ENCODE measurements at regions of chr4 and their contacts with region 1.

Region 1: DNA sequence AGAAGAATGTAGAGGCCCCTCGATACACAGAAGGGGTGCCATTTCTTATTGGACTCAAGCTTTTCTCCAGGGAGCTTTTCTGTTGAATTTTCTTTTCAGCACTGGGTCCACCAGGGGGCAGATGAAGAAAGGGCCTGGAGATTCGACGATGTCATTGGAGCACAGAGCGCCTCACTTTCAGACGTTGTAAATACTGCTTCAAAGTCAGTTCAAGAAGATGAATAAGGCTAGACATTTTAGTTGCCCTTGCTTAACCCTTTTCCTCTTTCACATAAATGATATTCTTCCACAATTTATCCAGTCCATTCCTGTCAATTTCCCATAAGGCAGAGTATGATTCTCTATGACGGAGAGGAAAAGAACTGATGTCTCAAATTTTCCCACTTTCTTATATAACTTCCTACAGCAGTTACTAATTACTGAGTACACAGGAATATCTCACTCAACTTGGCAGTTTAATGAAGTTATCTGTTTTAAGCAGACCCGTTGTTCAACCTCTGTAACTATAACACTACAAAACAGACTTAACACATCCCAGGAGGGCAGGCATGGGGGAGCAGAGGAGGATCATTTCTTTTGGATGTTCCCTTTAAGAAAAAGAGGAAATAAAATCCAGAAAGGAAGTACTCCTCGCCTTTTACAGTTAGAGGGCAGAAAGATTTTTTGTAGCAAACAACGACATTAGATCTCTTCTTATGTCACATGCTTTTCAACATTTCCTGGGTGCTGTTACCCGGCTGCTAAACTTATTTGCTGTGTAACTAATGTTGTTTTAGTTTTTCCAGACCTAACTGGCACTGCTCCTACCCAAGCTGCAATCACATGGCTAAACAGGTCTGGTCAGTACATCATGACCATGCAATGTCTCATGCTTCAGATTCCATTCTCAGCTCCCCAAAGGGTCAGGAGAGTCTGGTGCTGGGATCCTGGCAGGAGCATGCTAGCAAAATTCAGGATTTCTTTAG is 12.2 kb upstream of the CENPU start:
- DNase-seq: peak; percentile 81
- H3K4me3 ChIP-seq: no peak overlapping the region
- H3K27ac ChIP-seq: no peak overlapping the region
- H3K4me1 ChIP-seq: no peaks in the 10 kb centered on the region
- H3K27me3 ChIP-seq: no peaks in the 10 kb centered on the region
- CTCF ChIP-seq: peak; percentile 75

Region 2: GRCh38 chr4:184722798-184723197 is 23.3 kb before region 1 on chr4:
- CTCF ChIA-PET with region 1: interaction called, 10 read pairs
- POLR2A ChIA-PET with region 1: no interaction called
- intact Hi-C with region 1: no loop called
- DNase-seq: peak; percentile 29
- H3K4me3 ChIP-seq: no peak overlapping the region
- H3K27ac ChIP-seq: no peak overlapping the region
- H3K4me1 ChIP-seq: no peaks in the 10 kb centered on the region
- H3K27me3 ChIP-seq: no peaks in the 10 kb centered on the region
- CTCF ChIP-seq: peak; percentile 39

Region 3: GRCh38 chr4:184983672-184984356 is 237.7 kb after region 1 on chr4:
- CTCF ChIA-PET with region 1: interaction called, 12 read pairs
- POLR2A ChIA-PET with region 1: no interaction called
- intact Hi-C with region 1: loop called (anchors 1 kb)
- DNase-seq: peak; percentile 83
- H3K4me3 ChIP-seq: no peak overlapping the region
- H3K27ac ChIP-seq: no peak overlapping the region
- H3K4me1 ChIP-seq: peaks cover 5% of the 10 kb centered on the region
- H3K27me3 ChIP-seq: no peaks in the 10 kb centered on the region
- CTCF ChIP-seq: peak; percentile 56

Region 4: DNA sequence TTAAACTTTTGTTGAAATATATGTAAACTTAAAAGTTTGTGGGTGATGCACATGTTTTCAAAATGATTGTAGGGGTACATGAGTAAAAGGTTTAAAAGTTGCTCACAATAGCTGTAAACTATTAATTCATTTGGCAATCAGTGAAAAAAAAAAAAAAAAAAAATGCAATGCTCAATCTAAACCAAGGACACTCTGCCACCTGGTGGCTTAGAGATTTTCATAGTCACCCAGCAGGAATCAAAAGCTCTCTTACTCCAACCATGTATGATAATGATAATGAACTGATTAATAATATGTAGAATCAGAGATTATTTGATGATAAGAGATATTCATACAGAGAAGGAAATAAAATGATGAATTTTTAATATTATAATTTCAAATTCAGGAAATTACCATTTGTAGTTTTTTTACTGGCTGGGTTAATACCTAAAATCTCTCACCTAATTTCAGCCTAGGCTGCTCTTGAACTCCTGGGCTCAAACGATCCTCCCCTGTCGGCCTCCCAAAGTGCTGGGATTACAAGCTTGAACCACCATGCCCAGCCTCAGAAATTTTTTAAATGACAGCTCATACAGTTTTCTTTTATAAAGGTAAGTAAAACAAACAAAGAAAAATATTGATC is 350.0 kb after region 1 on chr4:
- CTCF ChIA-PET with region 1: interaction called, 7 read pairs
- POLR2A ChIA-PET with region 1: no interaction called
- intact Hi-C with region 1: loop called (anchors 10 kb)
- DNase-seq: peak; percentile 58
- H3K4me3 ChIP-seq: no peak overlapping the region
- H3K27ac ChIP-seq: no peak overlapping the region
- H3K4me1 ChIP-seq: no peaks in the 10 kb centered on the region
- H3K27me3 ChIP-seq: no peaks in the 10 kb centered on the region
- CTCF ChIP-seq: peak; percentile 68